Left cardiac atrium (tissue), 4 donors: ENCODE measurements at regions of chr11 and their contacts with region 1.

Region 1: DNA sequence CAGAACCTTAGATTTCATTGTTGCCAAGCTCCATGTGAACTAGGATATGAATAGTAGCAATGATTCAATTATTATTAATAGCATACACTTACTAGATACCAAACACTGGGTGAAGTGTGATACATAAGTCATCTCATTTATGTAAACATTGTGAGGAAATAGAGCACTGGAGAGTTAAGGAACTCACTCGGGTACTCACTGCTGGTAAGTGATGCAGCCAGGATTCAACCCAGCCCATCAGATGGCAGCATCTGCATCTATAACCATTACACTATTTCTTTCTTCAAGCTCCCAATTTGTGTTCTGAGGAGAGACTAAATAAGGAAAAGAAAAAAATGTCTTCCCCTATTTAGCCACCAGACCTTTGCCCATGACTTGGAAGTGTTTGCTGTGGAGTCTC is 10.2 kb upstream of the ALG8 start:
- DNase-seq: no peak
- ATAC-seq: peak; percentile 65 to 80

Region 2: DNA sequence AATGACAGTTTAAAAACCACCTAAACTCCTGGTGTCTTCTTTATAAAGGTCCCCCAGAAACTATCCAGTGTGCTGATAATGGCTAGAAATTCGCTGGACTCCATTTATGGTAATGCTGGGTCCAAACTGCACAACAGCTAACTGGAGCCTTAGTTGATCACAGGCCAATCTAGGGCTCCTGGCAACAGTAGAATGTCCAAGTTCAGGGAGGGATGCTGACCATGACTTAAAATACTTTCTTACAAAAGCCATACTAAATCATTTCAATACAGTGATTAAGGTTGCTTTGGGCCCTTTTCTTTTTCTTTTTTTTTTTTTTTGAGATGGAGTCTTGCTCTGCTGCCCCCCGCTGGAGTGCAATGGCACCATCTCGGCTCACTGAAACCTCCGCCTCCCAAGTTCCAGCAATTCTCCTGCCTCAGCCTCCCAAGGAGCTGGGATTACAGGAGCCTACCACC is 282.4 kb after region 1 on chr11:
- intact Hi-C with region 1: loop called (anchors 10 kb)
- DNase-seq: no peak
- ATAC-seq: peak in 1 of 2 donors; percentile 61

Region 3: DNA sequence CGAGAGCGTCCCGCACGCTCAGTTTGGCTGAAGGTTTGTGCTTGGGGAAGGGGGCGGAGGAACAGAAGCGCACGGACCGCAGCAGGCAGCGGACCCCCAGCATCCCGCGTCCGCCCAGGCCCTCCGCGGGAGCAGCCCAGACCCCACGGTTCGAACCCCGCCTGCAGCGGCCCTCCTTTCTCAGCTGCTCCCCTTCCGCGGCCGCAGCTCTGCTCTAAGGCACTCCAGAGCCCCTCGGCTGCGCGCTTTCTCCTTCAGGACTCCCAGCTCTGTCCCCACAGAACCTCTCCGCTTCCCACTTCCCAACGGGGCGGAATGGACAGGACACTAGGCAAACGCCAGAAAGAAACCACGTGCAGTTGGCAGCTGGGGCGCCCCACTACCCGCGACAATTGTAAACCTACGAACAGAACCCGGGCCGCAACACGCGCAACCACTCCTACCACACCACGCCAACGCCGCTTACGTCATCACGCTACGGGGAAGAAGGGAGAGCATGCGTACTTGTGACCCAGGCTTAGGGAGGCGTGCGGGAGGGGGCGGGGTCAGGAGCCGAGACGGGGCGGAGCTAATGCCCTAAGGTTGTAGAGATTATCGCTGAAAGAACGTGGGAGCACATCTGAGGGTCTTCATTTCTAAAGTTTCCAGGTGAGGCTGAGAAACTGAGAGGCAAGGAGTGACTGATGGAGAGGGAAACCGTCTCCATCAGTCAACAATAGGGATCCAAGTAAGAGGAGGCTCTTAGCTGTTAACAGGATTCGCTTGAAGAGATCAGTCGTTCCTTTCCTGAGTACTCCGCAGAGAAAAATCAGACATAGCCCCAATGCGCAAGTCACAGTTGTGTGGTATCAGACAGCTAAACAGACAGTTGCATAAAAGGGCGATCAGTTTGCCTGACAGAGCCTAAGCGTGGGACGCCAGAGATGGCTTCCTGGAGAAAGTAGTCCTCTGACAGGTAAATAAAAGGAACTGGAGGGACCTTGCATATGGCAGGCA is 425.0 kb after region 1 on chr11 and contains the start of gene NARS2:
- intact Hi-C with region 1: no loop called
- DNase-seq: peak; percentile 99
- ATAC-seq: peak; percentile 99 to 100
- total RNA-seq, gene NARS2: 11.2 to 11.8 TPM